ENCODE measurements at regions of chr17 and their contacts with region 1.

Region 1: DNA sequence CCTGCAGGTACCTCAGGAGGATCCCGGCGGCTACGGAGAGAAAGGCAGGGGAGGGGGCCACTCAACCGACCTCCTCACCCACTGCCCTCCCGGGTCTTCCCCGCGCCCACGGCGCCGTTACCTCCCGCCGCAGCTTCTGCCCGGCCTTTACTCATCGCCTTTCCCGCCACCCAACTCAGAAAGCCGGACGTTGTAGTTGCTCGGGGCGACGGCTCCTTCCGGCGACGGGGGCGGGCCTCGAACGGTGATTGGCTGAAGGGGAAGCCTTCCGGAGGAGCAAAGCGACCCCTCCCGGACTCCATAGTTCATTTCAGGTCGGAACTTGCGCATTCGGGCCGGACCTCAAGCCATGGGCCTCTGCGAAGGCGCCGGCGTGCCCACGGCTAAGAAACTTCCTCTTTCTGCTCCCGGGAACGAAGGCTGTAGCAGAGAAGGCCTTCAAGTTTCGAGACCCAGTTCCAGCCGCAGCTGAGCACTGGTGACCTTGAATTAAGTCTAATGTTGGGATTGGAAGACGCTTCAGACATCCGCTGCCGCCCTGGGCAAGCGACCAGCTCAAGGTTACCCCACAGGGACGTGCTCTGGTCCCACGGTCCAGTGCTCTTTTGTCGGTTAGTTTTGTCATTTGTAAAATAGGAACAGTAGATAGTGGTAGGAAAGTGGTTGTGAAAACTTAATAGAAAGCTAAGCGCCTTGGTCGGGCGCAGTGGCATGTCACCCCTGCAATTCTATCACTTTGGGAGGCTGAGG is at the start of gene PSMC3IP:
- H3K4me3 ChIP-seq: peak within 1 kb of the TSS; percentile 91
- H3K27ac ChIP-seq: peak within 1 kb of the TSS; percentile 92
- H3K4me1 ChIP-seq: peaks cover 4% of the 10 kb centered on the region
- CTCF ChIP-seq: peak; percentile 75

Region 2: GRCh38 chr17:42591411-42591810 is 13.7 kb after region 1 on chr17:
- CTCF ChIA-PET with region 1: interaction called, 20 read pairs
- POLR2A ChIA-PET with region 1: interaction called, 7 read pairs
- H3K4me3 ChIP-seq: no peak overlapping the region
- H3K27ac ChIP-seq: no peak overlapping the region
- H3K4me1 ChIP-seq: no peaks in the 10 kb centered on the region
- CTCF ChIP-seq: no peak

Region 3: DNA sequence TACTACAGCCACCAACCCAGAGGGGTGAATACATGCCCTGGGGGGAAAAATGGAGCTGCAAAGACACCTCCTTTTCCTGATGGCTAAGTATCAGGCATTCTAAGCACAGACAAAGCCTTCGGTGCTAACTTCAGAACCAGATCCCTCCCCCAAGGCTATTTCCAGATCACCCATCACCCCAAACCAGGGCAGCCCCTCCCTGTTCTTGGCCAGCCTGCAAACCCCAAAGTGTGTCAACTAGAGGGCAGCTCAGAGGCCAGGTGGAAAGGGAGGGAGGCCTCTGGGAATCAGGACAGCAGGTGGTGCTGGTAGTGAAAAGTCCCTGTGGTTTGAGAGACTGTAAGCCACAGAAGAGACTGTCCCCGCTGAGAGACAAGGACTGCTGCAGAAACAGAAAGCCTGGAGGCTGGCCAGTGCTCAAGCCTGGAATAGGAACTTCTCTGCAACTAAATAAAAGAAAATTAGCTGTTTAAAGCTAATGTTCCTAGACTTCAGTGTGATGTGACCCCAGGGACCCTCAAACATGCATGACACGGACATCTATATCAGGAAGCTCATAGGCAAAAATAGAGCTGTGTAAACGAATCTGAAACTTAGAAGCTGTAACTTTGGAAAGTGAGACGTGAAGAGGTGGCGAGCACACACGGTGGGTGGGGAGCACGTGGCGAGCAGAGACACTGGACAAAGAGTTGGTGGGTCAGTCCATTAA is 40.9 kb after region 1 on chr17:
- CTCF ChIA-PET with region 1: interaction called, 16 read pairs
- POLR2A ChIA-PET with region 1: interaction called, 3 read pairs
- H3K4me3 ChIP-seq: no peak overlapping the region
- H3K27ac ChIP-seq: no peak overlapping the region
- H3K4me1 ChIP-seq: no peaks in the 10 kb centered on the region
- CTCF ChIP-seq: peak; percentile 90

Region 4: DNA sequence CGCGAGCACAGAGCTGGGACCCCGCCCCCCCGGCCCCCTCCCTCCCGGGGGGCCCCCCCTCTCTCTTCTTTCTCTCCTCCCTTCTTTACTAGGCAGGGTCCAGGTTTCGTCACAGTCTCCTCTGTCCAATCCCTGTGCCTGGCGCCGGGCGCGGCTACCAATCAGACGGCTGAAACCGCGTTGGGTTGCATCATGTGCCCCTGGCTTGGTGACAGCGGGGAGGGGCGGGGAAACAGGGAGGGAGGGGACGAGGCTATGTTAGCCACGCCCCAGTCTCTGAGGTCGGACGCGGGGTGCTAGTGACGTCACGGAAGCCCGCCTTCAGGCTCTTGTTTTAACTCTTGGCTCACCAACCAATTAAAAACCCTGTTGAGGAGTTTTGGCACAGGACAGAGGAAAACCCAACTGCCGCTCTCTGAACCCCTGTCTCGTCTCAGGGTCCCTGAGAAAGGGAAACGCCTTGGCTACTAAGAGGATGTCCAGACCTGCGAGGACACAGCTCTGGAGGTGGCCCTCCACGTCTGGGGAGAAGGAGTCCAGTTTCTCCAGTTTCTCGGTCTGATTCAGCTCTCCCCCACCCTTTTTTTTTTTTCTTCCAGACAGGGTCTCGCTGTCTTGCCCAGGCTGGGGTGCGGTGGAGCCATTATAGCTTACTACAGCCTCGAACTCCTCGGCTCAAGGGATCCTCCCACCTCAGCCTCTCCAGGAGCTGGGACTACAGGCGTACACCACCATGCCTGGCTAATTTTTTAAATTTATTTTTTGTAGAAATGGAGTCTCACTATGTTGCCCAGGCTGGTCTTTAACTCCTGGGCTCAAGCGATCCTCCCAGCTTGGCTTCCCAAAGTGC is 99.5 kb after region 1 on chr17:
- CTCF ChIA-PET with region 1: interaction called, 53 read pairs
- POLR2A ChIA-PET with region 1: interaction called, 21 read pairs
- H3K4me3 ChIP-seq: peak overlapping the region; percentile 82
- H3K27ac ChIP-seq: peak overlapping the region; percentile 90
- H3K4me1 ChIP-seq: peaks cover 21% of the 10 kb centered on the region
- CTCF ChIP-seq: no peak

Region 5: DNA sequence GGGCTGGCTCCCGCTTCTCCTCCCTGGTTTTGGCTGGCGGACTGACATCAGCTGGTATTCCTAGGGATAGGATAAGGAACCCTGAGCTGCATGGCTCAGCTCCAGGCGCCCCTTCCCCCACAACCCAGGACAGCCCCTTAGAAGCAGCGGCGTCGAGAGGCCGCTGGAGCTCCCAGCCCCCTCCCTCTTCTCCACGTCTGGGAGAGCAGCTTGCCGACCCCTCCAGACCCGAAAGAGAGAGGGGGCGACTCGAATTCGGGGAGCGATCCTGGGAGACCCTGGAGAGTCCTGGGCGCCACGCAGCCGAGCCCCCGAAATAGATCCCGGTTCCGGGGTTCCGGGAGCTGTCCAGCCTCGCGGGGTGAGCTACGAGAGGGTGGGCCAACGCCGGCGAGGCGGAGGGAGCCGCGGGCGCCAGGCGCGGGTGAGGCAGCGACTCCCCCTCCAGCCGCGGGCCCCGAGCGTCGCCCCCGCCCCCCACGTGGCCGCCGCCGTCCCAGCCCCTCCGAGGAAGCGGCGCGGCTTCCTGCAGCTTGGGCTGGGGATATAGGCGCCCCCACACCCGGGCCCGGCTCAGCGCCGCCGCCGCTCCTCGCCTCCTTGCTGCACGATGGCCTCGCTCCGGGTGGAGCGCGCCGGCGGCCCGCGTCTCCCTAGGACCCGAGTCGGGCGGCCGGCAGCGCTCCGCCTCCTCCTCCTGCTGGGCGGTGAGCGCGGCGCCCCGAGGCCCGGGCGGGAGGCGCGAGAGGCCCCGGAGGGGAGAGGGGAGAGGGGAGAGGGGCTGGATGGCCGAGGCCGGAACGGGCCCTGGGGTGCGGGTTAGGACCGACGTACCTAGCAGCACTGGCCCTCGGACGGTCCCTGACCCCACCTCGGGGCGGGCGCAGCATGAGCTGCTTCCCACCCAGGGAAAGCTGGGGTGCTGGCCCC is 183.2 kb after region 1 on chr17 and contains the start of gene RAMP2:
- CTCF ChIA-PET with region 1: interaction called, 112 read pairs
- POLR2A ChIA-PET with region 1: interaction called, 10 read pairs
- H3K4me3 ChIP-seq: no peak within 1 kb of the TSS
- H3K27ac ChIP-seq: no peak within 1 kb of the TSS; the same call in 1 of the 2 replicates
- H3K4me1 ChIP-seq: peaks cover 2% of the 10 kb centered on the region; the same call in 1 of the 2 replicates
- CTCF ChIP-seq: no peak

Region 6: DNA sequence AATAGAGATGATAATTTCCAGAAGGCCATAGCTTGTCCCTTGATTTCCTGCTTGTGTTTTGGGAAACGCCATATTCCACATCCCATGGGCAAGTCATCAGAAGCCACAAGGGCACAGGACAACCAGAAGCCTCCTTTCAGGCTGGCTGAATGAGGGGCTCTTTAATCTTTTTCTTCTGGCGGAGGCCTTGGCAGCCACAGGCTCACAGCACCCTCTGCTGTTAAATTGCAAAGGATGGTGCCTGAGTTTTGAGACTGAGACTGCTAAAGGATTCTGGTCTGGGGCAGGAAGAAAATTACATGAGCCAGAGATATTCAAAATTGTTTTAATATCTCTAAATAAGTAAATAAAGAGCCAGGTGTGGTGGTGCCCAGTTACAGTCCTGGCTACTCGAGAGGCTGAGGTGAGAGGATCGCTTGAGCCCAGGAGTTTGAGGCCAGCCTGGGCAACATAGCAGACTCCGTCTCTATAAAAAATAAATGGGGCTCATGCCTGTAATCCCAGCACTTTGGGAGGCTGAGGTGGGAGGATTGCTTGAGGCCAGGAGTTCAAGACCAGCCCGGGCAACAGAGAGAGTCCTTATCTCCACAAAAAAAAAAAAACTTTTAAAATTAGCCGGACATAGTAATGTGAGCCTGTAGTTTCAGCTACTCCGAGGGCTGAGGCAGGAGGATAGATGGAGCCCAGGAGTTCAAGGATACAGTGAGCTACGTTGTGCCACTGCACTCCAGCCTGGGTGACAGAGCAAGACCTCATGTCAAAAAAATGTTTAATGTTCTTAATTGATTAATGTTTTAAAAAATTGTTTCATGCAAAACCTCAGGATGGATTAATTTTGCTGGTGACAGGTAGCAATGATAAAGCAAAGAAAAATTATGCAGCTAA is 360.2 kb after region 1 on chr17:
- CTCF ChIA-PET with region 1: interaction called, 14 read pairs
- POLR2A ChIA-PET with region 1: no interaction called
- H3K4me3 ChIP-seq: no peak overlapping the region
- H3K27ac ChIP-seq: no peak overlapping the region
- H3K4me1 ChIP-seq: no peaks in the 10 kb centered on the region
- CTCF ChIP-seq: peak; percentile 66

Measured in HEK293 (cell line).